Mammary epithelial cell (primary cell): ENCODE measurements at regions of chr3 and their contacts with region 1.

Region 1: DNA sequence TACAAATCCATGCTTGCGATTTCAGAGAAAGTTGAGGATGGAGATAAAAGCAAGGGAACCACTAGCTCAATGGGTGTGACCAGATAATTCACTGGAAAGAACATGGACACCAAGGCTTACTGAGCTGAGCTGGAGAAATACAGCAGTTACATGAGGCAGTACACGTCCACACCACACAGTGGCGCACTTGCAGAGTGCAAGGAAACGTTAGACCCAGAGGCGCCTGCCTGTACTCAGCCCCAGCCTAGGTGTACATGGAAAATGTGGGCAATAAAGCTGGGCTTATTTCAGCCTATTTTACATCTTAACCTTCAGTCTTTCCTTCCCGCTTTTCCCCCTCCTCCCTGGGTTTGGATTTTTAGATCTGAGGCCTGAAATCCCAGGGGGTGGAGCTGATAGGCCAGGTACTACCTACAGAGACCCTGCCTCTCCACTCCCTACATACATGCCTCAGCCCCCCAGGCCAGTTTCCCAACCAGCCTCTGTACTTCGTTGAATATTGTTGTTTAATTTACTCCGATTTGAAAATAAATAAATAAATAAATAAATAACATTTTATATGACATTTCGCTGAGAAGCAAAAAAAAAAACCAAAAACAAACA is 60.1 kb downstream of the PCOLCE2 start:
- DNase-seq: peak; percentile 64
- H3K4me3 ChIP-seq: no peak overlapping the region
- H3K27ac ChIP-seq: no peak overlapping the region
- H3K4me1 ChIP-seq: no peaks in the 10 kb centered on the region
- H3K27me3 ChIP-seq: no peaks in the 10 kb centered on the region
- CTCF ChIP-seq: peak; percentile 96 to 97

Region 2: GRCh38 chr3:142586803-142587406 is 241.9 kb before region 1 on chr3:
- CTCF ChIA-PET with region 1: interaction called, 5 read pairs
- dilution Hi-C with region 1: loop called (anchors 25 kb)
- in situ Hi-C with region 1: loop called (anchors 10 to 25 kb)
- intact Hi-C with region 1: loop called (anchors 1 kb)
- DNase-seq: peak; percentile 78
- H3K4me3 ChIP-seq: no peak overlapping the region
- H3K27ac ChIP-seq: no peak overlapping the region
- H3K4me1 ChIP-seq: peaks cover 6% of the 10 kb centered on the region
- H3K27me3 ChIP-seq: no peaks in the 10 kb centered on the region
- CTCF ChIP-seq: peak; percentile 46 to 71

Region 3: GRCh38 chr3:142857056-142857455 is 28.3 kb after region 1 on chr3:
- CTCF ChIA-PET with region 1: no interaction called
- dilution Hi-C with region 1: no loop called
- in situ Hi-C with region 1: no loop called
- intact Hi-C with region 1: no loop called
- DNase-seq: peak; percentile 45
- H3K4me3 ChIP-seq: no peak overlapping the region
- H3K27ac ChIP-seq: no peak overlapping the region
- H3K4me1 ChIP-seq: peaks cover 12% of the 10 kb centered on the region
- H3K27me3 ChIP-seq: no peaks in the 10 kb centered on the region
- CTCF ChIP-seq: peak; percentile 55 to 60

Region 4: DNA sequence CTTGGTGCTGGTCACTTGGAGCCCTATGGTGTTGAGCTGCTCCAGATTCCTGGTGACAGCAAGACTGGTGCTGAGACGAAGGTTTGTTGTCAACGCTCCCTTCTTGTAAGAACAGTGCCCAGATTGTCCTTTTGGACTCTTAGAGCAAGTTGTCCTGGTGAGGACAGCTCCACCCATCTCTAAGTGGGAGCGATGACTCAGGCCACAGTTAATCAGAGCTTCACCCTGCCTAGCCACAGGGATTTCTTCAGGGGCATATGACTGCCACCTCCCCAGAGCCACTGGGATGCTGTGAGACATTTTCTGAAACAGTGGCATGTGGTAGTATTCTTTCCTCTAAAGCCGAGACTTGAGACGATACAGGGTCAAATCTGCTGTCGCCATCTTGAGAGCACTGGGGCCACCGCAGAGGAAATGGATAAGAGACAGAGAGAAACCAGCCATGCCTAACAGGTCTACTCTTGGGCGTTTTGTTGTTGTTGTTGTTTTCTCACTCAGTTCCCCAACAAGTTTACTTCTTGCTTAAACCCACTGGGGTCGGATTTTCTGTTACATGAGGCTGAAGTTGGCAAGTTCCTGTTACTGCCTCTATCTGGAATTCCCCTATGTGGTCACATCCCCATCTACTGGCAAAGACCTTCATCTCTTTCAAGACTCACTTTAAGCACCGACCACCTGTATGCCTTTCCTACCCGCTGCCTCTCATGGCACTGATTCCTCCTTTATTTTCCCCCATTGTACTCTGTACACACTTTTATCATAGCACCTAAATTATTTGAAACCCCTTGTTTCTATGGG is 76.0 kb after region 1 on chr3:
- CTCF ChIA-PET with region 1: no interaction called
- dilution Hi-C with region 1: no loop called
- in situ Hi-C with region 1: no loop called
- intact Hi-C with region 1: loop called (anchors 1 kb)
- DNase-seq: peak; percentile 71
- H3K4me3 ChIP-seq: no peak overlapping the region
- H3K27ac ChIP-seq: no peak overlapping the region
- H3K4me1 ChIP-seq: peaks cover 3% of the 10 kb centered on the region
- H3K27me3 ChIP-seq: no peaks in the 10 kb centered on the region
- CTCF ChIP-seq: peak in 1 of 2 donors; percentile 33

Region 5: GRCh38 chr3:142987080-142987700 is 158.4 kb after region 1 on chr3:
- CTCF ChIA-PET with region 1: no interaction called
- dilution Hi-C with region 1: loop called (anchors 25 kb)
- in situ Hi-C with region 1: loop called (anchors 5 kb)
- intact Hi-C with region 1: loop called (anchors 1 kb)
- DNase-seq: peak; percentile 27
- H3K4me3 ChIP-seq: no peak overlapping the region
- H3K27ac ChIP-seq: no peak overlapping the region
- H3K4me1 ChIP-seq: no peaks in the 10 kb centered on the region
- H3K27me3 ChIP-seq: no peaks in the 10 kb centered on the region
- CTCF ChIP-seq: peak; percentile 55 to 63